ENCODE measurements at regions of chr12 and their contacts with region 1.

Region 1: GRCh38 chr12:15584366-15585041 is 204.7 kb downstream of the EPS8 start:
- DNase-seq: peak; percentile 58
- H3K4me3 Mint-ChIP-seq: no peak overlapping the region
- H3K27ac Mint-ChIP-seq: no peak overlapping the region
- H3K4me1 Mint-ChIP-seq: peaks cover 12% of the 10 kb centered on the region
- H3K27me3 Mint-ChIP-seq: no peaks in the 10 kb centered on the region

Region 2: GRCh38 chr12:15151161-15152120 is 433.1 kb before region 1 on chr12:
- CTCF ChIA-PET with region 1: no interaction called
- intact Hi-C with region 1: loop called (anchors 5 kb)
- DNase-seq: no peak
- H3K4me3 Mint-ChIP-seq: no peak overlapping the region
- H3K27ac Mint-ChIP-seq: no peak overlapping the region
- H3K4me1 Mint-ChIP-seq: no peaks in the 10 kb centered on the region
- H3K27me3 Mint-ChIP-seq: peaks cover 8% of the 10 kb centered on the region

Region 3: GRCh38 chr12:15276088-15276698 is 308.3 kb before region 1 on chr12:
- CTCF ChIA-PET with region 1: interaction called, 26 read pairs
- intact Hi-C with region 1: loop called (anchors 1 kb)
- DNase-seq: no peak
- H3K4me3 Mint-ChIP-seq: no peak overlapping the region
- H3K27ac Mint-ChIP-seq: no peak overlapping the region
- H3K4me1 Mint-ChIP-seq: peaks cover 3% of the 10 kb centered on the region
- H3K27me3 Mint-ChIP-seq: peaks cover 5% of the 10 kb centered on the region

Region 4: DNA sequence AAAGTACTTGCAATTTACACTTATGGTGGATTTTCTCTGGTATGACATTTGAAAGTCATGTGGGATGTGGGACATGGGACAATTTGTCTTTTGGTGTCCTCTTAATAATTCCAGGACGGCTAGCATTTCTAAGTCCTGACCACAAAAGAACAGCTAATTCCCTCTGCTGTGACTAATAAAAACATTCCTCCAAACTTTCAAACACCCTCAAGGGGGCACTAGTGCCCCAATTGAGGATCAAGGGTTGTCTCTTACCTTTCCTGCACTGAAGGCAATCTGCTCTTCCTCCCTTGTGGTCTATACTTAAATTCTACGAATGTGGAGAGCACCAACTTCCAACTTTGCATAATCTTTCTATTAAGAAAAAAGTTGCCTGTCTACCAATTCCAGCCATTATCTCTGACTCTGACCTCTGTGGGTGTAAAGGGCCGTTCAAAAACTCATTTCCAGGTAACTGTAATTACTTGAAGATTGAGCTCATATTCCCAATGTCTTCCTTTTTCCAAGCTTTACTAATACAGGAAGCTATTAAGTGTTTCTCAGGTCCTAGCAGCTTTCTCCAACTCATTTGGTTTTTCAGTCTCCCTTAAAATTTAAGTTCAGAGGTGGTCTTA is 52.0 kb before region 1 on chr12:
- CTCF ChIA-PET with region 1: interaction called, 460 read pairs
- intact Hi-C with region 1: loop called (anchors 1 kb)
- DNase-seq: peak; percentile 72
- H3K4me3 Mint-ChIP-seq: no peak overlapping the region
- H3K27ac Mint-ChIP-seq: no peak overlapping the region
- H3K4me1 Mint-ChIP-seq: peaks cover 18% of the 10 kb centered on the region
- H3K27me3 Mint-ChIP-seq: no peaks in the 10 kb centered on the region

Region 5: GRCh38 chr12:15556411-15557102 is 27.9 kb before region 1 on chr12:
- CTCF ChIA-PET with region 1: interaction called, 21 read pairs
- intact Hi-C with region 1: no loop called
- DNase-seq: no peak
- H3K4me3 Mint-ChIP-seq: no peak overlapping the region
- H3K27ac Mint-ChIP-seq: no peak overlapping the region
- H3K4me1 Mint-ChIP-seq: peaks cover 44% of the 10 kb centered on the region
- H3K27me3 Mint-ChIP-seq: no peaks in the 10 kb centered on the region

Region 6: GRCh38 chr12:15789220-15790171 is 205.0 kb after region 1 on chr12 and contains the start of gene EPS8:
- CTCF ChIA-PET with region 1: interaction called, 10 read pairs
- intact Hi-C with region 1: no loop called
- DNase-seq: peak; percentile 88
- H3K4me3 Mint-ChIP-seq: peak within 1 kb of the TSS; percentile 82
- H3K27ac Mint-ChIP-seq: no peak within 1 kb of the TSS
- H3K4me1 Mint-ChIP-seq: peaks cover 15% of the 10 kb centered on the region
- H3K27me3 Mint-ChIP-seq: peaks cover 49% of the 10 kb centered on the region
- total RNA-seq, gene EPS8: 3.2 to 5.6 TPM